ENCODE measurements at regions of chr15 and their contacts with region 1.

Region 1: DNA sequence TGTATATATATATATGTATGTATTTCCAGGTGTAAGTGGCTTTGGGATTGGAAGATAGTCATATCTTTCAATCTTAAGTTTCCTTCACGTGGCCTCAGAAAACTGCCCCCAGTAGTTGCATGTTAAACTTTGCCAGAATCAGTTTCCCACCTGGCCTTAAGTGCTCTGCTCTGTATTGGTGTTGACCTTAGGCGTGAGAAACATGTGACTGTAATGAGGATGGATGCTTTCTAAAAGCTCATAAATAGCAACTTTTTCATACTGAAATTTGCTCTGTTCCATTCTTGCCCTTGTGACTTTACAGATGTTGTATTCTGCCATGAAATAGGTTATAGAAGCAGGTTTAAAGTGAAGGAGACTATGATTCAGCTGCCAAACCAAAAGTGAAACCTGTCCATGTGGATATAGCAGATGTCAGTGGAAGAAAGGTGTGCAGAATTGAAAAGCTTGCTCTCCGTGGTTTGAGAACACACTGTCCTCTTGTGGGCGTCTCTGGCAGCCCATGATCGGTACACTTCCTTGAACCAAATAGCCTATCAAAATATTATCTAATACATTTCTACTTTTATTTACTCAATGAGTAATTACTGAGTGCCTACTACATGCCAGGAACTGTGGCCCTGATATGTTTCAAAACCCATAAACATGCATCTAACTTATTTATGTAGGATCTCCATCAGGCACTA is 15.8 kb downstream of the SCG5 start:
- DNase-seq: no peak
- ATAC-seq: no peak
- H3K4me3 ChIP-seq: no peak overlapping the region
- H3K27ac ChIP-seq: no peak overlapping the region
- H3K4me1 ChIP-seq: peaks cover 24% of the 10 kb centered on the region
- CTCF ChIP-seq: 0 out of 3 replicates have a peak, but pooled peaks have one; percentile 11
- EP300 ChIP-seq: no peak
- POLR2A ChIP-seq: no peak
- RAD21 ChIP-seq: no peak

Region 2: DNA sequence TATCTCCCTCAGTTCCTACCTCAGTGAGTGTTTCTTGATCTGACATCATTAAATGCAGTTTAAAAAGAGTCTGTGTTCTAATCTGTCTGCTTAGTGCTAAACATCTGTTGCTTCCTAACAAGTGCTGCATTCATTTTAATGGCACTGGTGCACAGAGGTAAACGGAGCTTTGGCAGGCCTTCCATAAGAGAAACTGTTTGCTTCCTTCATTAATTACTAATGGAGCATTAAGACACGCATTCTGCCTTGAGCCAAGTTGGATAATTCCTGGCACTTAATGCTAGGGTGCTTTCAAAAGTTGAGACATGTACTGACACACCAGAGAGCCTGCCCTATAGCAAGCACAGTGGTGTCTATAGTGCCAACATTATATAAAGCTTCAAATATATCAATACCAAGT is 18.8 kb after region 1 on chr15:
- CTCF ChIA-PET with region 1: interaction called, 60 read pairs
- POLR2A ChIA-PET with region 1: no interaction called
- DNase-seq: no peak
- ATAC-seq: no peak
- H3K4me3 ChIP-seq: no peak overlapping the region
- H3K27ac ChIP-seq: peak overlapping the region; percentile 41 to 77
- H3K4me1 ChIP-seq: peaks cover 40% of the 10 kb centered on the region
- CTCF ChIP-seq: no peak
- EP300 ChIP-seq: no peak
- POLR2A ChIP-seq: no peak
- RAD21 ChIP-seq: no peak

Region 3: GRCh38 chr15:32824777-32825176 is 167.4 kb after region 1 on chr15:
- CTCF ChIA-PET with region 1: interaction called, 141 read pairs
- POLR2A ChIA-PET with region 1: no interaction called
- DNase-seq: peak; percentile 80 to 89
- ATAC-seq: peak; percentile 81 to 86
- H3K4me3 ChIP-seq: no peak overlapping the region; the same call in 2 of the 3 replicates
- H3K27ac ChIP-seq: peak overlapping the region; percentile 79 to 86
- H3K4me1 ChIP-seq: peaks cover 70% of the 10 kb centered on the region
- CTCF ChIP-seq: peak; percentile 41
- EP300 ChIP-seq: peak; percentile 80 to 84; a peak in 4 of 5 replicates
- POLR2A ChIP-seq: no peak
- RAD21 ChIP-seq: peak; percentile 72 to 83

Region 4: DNA sequence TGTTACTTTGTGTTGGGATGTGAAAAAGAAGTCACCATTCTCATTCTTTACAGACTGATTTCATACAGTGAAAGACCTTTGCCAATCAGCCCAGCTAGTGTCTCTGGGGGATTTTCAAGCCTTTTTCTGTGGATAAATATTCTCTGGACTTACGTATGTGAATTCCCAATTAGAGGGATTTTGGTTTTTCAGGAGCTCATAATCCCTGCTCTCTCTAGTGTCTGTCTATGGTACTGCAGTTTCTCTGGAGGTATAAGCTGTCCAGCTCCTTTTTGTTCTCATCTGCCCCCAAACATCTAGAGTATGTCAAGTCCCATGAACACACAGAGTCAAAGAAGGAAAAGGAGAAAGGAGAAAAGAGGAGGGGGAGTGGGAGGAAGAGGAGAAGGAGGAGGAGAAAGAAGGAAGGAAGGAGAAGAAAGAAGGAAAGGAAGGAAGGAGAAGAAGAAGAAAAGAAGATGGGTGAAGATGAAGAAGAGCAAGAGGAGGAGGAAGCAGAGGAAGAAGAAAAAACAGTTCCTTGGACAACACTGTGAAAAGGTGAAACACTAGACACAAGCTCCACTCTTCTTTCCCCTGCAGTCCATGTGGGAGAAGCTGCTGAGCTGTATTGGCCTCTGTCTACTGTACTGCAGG is 279.1 kb after region 1 on chr15:
- CTCF ChIA-PET with region 1: interaction called, 17 read pairs
- POLR2A ChIA-PET with region 1: no interaction called
- DNase-seq: peak; percentile 20 to 52
- ATAC-seq: peak; percentile 39 to 76; a peak in 3 of 6 replicates
- H3K4me3 ChIP-seq: no peak overlapping the region
- H3K27ac ChIP-seq: no peak overlapping the region
- H3K4me1 ChIP-seq: no peaks in the 10 kb centered on the region
- CTCF ChIP-seq: peak; percentile 34; the same call in 2 of the 3 replicates
- EP300 ChIP-seq: no peak
- POLR2A ChIP-seq: no peak
- RAD21 ChIP-seq: peak in 1 of 2 experiments; percentile 53; a peak in 2 of 5 replicates

Region 5: DNA sequence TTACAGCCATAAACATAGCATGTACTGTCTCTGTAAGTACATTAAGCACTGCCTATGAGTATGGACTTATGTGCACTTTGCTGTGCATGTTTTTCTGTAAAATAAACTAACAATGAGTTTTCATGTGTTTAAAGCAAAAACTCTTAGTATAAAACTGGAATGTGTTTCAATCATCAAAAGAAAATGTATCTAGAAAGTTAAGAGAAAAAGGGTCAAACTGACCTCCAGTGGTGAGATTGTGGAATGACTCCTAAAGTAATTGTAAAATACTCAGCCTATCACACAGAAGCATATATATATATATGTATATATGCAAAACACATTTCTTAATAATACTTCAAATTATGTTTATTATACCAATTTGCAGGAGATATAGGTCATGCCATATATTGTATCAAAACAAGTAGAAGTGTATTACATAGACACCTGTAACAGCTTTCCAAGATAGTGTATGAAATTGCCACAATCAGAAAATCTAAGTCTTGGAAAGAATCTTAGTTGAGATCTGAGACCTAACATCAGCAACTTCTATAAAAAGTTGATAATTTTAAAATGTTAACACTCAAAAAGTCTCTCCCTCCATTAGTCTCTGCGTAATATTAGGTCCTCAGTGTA is 337.6 kb after region 1 on chr15:
- CTCF ChIA-PET with region 1: interaction called, 374 read pairs
- POLR2A ChIA-PET with region 1: no interaction called
- DNase-seq: peak; percentile 13 to 62
- ATAC-seq: peak; percentile 52 to 82; a peak in 3 of 6 replicates
- H3K4me3 ChIP-seq: no peak overlapping the region
- H3K27ac ChIP-seq: peak overlapping the region in 1 of 2 experiments; percentile 38; a peak in 3 of 6 replicates
- H3K4me1 ChIP-seq: no peaks in the 10 kb centered on the region
- CTCF ChIP-seq: peak; percentile 95
- EP300 ChIP-seq: no peak
- POLR2A ChIP-seq: no peak
- RAD21 ChIP-seq: peak; percentile 89 to 95

Region 6: DNA sequence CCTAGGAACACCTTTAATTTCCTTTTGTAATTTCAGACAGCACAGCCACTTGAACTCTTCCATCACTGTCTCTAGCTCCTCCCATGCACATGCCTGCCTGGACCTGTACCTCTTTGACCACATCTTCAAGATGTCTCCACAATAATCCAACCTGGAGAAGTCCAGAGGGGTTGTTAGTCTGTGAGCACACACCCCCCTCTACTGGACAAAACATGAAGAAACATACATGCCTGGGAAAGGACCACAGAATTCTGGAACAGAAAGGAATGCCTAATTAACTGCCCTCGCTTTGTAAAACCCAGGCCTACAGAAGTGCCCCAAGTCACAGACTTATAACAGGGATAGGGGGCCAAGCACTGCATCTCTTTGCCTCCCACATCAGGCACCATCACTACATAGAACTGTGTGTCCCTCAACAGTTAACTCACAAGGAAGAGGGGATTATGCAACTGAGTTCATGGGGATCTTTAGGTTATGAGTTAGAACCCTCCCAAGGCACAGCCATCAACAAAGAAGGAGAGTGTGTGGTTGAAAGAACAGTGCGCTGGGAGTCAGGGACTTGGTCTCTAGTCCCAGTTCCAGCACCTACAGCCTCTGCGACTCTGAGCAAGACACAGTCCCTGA is 475.5 kb after region 1 on chr15:
- CTCF ChIA-PET with region 1: interaction called, 23 read pairs
- POLR2A ChIA-PET with region 1: no interaction called
- DNase-seq: peak; percentile 65 to 74
- ATAC-seq: peak; percentile 94 to 98
- H3K4me3 ChIP-seq: no peak overlapping the region
- H3K27ac ChIP-seq: no peak overlapping the region
- H3K4me1 ChIP-seq: no peaks in the 10 kb centered on the region; the same call in 2 of the 3 replicates
- CTCF ChIP-seq: peak; percentile 91
- EP300 ChIP-seq: no peak
- POLR2A ChIP-seq: no peak
- RAD21 ChIP-seq: peak; percentile 92 to 95

Region 7: DNA sequence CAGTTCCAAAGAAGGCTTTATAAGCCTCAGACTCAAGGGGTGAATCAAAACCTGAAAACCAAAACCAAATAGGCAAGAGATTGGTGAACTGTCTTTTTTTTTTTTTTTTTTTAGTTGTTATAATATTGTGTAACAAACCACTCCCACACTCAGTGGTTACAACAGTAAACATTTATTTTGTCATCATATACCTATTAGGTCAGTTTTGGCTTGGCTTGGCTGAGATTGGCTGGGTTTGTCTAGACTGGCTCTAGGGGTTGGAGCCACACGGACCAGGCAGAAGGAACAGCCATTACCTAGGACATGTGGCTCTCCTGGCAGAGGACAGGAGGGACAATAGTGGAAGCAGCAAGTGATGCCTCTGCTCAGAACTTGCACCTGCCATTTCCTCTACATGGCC is 627.0 kb after region 1 on chr15:
- CTCF ChIA-PET with region 1: no interaction called
- POLR2A ChIA-PET with region 1: no interaction called
- DNase-seq: no peak
- ATAC-seq: no peak
- H3K4me3 ChIP-seq: no peak overlapping the region
- H3K27ac ChIP-seq: no peak overlapping the region
- H3K4me1 ChIP-seq: peaks cover 9% of the 10 kb centered on the region
- CTCF ChIP-seq: no peak
- EP300 ChIP-seq: no peak
- POLR2A ChIP-seq: no peak
- RAD21 ChIP-seq: no peak

Measured in A549 (cell line).